Right lobe of liver (tissue), 6 donors: ENCODE measurements at regions of chr20 and their contacts with region 1.

Region 1: DNA sequence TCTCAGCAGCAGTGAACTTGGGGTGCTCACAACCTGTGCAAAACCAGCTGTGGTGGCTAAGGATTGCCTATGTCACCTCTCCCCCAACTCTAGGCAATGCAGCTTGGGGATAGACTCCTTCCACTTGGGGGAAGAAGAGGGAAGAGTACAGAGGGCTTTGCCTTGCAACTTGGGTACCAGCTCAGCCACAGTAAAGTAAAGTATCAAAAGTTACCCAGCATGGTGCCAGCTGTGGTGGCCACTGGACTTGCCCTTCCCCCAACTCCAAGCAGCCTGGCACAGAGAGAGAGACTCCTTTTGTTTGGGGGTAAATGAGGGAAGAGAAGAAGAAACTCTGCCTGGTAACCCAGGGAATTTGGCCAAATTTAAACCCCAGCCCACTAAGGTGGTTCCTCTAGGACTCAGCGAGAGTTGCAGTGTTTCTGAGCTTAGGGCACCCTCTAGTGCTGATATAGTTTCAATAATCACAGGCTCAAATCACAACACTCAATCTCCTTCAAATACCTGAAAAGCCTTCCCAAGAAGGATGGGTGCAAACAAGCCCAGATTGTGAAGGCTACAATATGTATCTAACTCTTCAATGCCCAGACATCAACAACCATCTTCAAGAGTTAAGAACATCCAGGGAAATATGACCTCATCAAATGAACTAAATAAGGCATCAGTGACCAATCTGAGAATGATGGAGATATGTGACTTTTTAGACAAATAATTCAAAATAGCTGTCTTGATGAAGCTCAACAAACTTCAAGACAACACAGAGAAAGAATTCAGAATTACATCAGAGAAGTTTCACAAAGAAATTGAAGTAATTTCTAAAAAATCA is 7.6 kb upstream of the DEFB129 start:
- DNase-seq: no peak
- ATAC-seq: peak in 3 of 4 donors; percentile 48 to 57 (median 50)
- H3K4me3 ChIP-seq: no peak overlapping the region
- H3K27ac ChIP-seq: no peak overlapping the region
- H3K4me1 ChIP-seq: no peaks in the 10 kb centered on the region
- H3K27me3 ChIP-seq: peaks cover 0 to 6% of the 10 kb centered on the region in 2 donors
- CTCF ChIP-seq: peak in 3 of 4 donors; percentile 15 to 37 (median 29)
- POLR2A ChIP-seq: no peak

Region 2: GRCh38 chr20:103456-103855 is 116.0 kb before region 1 on chr20:
- intact Hi-C with region 1: no loop called
- DNase-seq: no peak
- ATAC-seq: no peak
- H3K4me3 ChIP-seq: no peak overlapping the region
- H3K27ac ChIP-seq: no peak overlapping the region
- H3K4me1 ChIP-seq: no peaks in the 10 kb centered on the region
- H3K27me3 ChIP-seq: peaks cover 0 to 6% of the 10 kb centered on the region in 2 donors
- CTCF ChIP-seq: no peak
- POLR2A ChIP-seq: no peak

Region 3: DNA sequence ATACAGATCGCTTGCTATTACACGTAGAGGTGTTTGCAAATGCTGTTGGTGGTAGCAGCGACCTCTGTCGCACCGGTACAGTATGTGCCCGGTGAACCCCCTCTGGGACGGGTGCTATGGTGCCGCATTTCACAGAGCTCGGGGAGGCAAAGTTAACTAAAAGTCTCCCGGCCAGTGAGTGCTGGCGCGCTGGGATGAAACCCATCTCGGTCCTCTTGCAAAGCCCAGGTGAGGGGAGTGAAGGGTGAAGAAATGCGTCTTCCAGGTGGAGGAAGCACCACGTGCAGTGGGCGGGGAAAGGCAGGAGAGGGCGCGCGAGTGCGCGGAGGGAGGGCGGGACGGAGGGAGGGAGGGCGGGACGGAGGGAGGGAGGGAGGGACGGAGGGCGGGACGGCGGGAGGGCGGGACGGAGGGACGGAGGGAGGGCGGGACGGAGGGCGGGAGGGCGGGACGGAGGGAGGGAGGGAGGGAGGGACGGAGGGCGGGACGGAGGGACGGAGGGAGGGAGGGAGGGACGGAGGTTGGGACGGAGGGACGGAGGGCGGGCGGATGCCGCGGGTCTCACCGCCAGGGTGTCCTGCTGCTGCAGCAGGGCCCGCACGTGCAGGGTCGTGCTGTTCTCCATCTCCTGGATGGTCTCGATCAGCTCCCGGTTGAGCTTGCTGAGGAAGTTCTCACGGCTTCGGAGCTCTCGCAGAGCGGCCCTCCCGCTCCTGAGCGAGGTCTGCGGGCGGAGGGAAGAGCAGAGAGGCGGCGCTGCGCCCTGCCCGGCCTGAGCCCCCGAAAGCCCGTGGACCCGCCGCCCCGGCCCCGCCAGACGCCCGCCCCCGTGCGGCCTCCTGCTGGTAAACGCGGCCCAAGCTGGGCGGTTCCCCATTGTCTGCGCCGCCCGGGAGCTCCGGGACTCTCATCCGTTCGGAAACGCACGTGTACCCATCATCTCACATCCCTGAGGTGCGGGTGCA is 59.4 kb after region 1 on chr20:
- intact Hi-C with region 1: loop called in 1 of 2 experiments (anchors 10 kb)
- DNase-seq: peak in 2 of 3 donors; percentile 34 to 36
- ATAC-seq: peak in 3 of 4 donors; percentile 28 to 61 (median 49)
- H3K4me3 ChIP-seq: no peak overlapping the region
- H3K27ac ChIP-seq: no peak overlapping the region
- H3K4me1 ChIP-seq: no peaks in the 10 kb centered on the region
- H3K27me3 ChIP-seq: no peaks in the 10 kb centered on the region
- CTCF ChIP-seq: peak in 1 of 4 donors; percentile 5
- POLR2A ChIP-seq: no peak

Region 4: DNA sequence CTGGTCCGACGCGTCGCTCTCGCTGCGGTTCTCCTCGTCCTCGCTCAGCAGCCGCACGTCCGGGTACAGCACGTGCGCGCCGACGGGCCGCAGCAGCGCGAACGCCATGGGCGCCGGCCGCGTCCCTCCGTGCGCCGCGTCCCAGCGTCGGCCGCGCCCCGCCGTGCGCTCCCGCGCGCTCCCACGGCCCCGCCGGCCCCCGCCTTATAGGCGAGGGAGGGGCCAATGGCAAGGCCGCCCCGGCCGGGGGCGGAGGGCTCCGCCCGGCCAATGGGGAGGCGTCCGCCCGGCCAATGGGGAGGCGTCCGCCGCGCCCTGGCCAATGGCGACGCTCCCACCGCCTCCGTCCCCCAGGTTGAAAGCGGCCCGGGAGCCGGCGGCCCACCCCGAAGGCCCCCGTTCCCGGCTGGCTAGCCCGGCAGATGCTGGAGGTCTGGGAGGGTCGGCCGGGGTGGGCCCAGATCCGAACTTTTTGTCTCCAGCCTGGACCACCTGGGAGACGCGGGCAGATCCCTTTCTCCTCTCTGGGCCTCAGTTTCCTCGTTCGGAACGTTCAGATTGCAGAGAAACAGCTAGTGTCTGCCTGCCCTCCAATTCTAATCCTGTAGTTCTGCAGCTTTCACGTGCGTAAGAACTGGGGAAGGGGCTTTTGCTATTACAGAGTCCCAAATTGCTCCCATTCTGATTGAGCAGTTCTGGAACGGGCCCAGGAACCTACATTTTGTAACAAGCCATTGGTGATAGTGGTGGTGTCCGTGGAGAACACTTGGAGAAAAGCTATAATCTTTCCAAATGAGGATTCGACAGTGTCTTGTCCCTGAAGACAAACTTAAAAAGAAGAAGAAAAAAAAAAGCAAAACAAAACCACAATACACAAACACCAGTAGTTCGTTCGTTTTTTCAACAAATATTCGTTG is 390.9 kb after region 1 on chr20 and contains the start of gene TCF15:
- intact Hi-C with region 1: no loop called
- DNase-seq: peak in 1 of 3 donors; percentile 42
- ATAC-seq: peak; percentile 61 to 78 (median 70)
- H3K4me3 ChIP-seq: no peak within 1 kb of the TSS
- H3K27ac ChIP-seq: no peak within 1 kb of the TSS
- H3K4me1 ChIP-seq: no peaks in the 10 kb centered on the region
- H3K27me3 ChIP-seq: peaks cover 0 to 6% of the 10 kb centered on the region in 2 donors
- CTCF ChIP-seq: no peak
- POLR2A ChIP-seq: no peak
- total RNA-seq, gene TCF15: 0.33 TPM in 1 of 6 experiments, not detected in the others